Gastrocnemius medialis (tissue), 4 donors: ENCODE measurements at regions of chr19 and their contacts with region 1.

Region 1: DNA sequence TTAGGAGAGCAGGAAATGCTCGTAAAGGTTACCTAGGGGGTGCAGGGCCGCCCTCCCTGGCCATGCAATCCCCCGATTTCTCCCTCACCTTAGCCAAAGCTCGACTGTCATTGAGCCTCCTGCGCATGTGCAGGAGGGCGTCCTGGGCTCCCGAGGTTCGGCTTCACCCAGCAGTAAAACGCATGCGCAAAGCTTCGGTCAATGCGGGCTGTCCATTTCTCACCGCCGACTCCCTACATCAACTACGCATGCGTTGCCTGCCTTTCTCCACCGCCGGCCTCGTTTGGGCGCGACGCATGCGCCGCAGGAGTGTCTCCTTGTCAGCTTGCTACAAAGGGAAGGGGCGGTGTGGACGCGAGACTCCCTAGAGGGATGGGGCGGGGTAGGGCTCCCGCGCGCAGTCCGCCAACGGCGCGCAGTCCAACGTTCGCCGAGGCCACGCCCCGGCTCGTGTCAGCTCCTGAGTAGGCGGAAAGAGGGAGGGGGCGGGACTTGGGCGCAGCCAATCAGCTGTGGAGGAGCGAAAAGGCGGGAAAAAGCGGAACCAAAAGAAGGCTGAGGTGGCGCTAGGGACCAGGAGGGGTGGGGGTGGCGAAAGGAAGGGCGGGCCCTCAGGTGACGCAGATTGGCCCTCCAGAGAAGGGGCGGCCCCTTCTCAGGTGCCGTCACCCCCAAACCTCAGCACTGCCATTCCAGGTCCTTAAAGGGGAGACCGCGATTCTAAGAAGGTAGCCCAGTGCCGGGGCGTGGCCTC is at the starts of genes SYNGR4 and TMEM143:
- DNase-seq: peak; percentile 98 to 99
- ATAC-seq: peak; percentile 94 to 97
- H3K4me3 ChIP-seq: peak within 1 kb of the TSS; percentile 75 to 99 (median 84)
- H3K27ac ChIP-seq: peak within 1 kb of the TSS; percentile 97 to 100 (median 99)
- H3K4me1 ChIP-seq: peaks cover 4 to 10% of the 10 kb centered on the region in 2 donors
- H3K27me3 ChIP-seq: no peaks in the 10 kb centered on the region
- CTCF ChIP-seq: no peak
- POLR2A ChIP-seq: peak in 1 of 2 donors; percentile 35
- total RNA-seq, gene SYNGR4: not detected
- total RNA-seq, gene TMEM143: 28.8 to 42.3 (median 40.7) TPM

Region 2: GRCh38 chr19:48332662-48333466 is 31.1 kb before region 1 on chr19:
- in situ Hi-C with region 1: no loop called
- intact Hi-C with region 1: loop called (anchors 1 kb)
- DNase-seq: peak; percentile 85 to 90
- ATAC-seq: peak; percentile 87 to 92
- H3K4me3 ChIP-seq: peak overlapping the region; percentile 49 to 58 (median 52)
- H3K27ac ChIP-seq: peak overlapping the region; percentile 82 to 84 (median 83)
- H3K4me1 ChIP-seq: peaks cover 10 to 15% of the 10 kb centered on the region in 2 donors
- H3K27me3 ChIP-seq: no peaks in the 10 kb centered on the region
- CTCF ChIP-seq: no peak
- POLR2A ChIP-seq: peak; percentile 11 to 47

Region 3: GRCh38 chr19:48391107-48391986 is 27.4 kb after region 1 on chr19 and contains the start of gene KDELR1:
- in situ Hi-C with region 1: no loop called
- intact Hi-C with region 1: loop called (anchors 1 kb)
- DNase-seq: peak; percentile 58 to 66
- ATAC-seq: peak; percentile 91 to 92
- H3K4me3 ChIP-seq: peak within 1 kb of the TSS; percentile 83 to 100 (median 92)
- H3K27ac ChIP-seq: peak within 1 kb of the TSS; percentile 85 to 91 (median 88)
- H3K4me1 ChIP-seq: peaks cover 4 to 19% of the 10 kb centered on the region in 2 donors
- H3K27me3 ChIP-seq: peaks cover 36 to 41% (median 41%) of the 10 kb centered on the region in 3 donors
- CTCF ChIP-seq: peak; percentile 78 to 96 (median 87)
- POLR2A ChIP-seq: peak; percentile 60 to 68
- total RNA-seq, gene KDELR1: 44.9 to 64.7 (median 54.0) TPM